HEK293 (cell line): ENCODE measurements at regions of chr17 and their contacts with region 1.

Region 1: DNA sequence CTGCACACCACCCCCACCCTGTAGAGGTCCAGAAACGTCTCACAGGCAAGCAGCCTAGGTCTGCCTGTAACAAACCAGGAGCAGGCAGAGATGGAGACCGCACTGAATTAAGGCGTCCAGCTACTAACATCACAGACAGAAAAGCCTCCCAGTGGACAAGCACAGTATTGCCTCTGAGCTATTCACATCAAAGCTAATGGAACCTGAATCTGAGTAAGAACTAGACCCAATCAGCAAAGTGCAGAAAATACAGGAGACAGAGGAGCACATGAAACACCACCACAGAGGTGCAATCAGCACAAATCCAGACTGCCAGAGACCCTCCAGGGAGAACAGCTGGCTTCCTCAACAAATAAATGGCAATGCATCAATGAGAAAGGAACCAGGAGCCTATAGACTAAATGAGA is 22.2 kb upstream of the PEMT start:
- H3K4me3 ChIP-seq: no peak overlapping the region
- H3K27ac ChIP-seq: no peak overlapping the region
- H3K4me1 ChIP-seq: no peaks in the 10 kb centered on the region
- CTCF ChIP-seq: peak; percentile 57

Region 2: DNA sequence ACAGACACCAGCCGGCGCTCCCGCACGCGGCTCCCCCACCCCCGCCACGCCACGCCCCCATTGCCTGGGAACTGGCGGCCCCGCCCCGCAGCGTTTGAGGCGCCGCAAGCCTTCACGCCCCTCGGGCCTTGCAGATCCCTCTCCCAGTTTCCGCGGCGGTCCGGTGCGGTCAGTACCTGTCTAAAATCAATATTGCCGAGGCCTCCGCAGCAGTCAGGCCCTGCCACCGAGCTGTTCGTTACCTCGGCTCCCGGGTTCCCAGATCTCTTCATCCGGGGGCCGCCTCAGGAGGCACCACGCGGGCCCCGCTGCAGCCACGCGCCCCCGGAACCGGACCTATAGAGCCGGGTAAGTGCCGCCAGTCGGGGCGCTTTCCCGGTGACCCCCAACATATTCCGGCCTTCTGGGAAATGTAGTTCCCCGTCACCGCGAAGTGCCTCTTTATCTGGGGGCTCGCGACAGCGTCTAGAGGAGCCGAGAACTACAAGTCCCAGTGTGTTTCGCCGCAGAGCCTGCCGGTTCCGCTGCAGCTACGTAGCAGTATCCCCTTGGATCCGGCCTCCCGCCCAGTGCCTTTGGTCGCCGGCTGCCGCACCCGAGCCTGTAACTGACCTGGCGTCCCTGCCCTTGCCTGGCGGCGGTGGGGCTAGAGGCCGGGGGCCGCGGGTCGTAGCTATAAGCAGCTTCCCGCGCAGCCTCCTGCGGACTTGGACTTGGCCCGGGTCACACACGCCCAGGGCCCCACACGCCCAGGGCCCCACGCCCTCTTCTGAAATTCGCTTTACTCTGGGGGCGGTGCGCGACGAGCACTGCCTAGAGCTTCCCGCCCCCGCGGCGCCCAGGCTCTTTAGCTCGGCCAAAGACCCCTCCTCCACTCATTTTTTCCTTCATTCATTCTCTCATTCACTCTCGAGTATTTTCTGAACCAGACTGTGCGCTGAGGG is 22.1 kb before region 1 on chr17 and contains the start of gene PEMT:
- CTCF ChIA-PET with region 1: interaction called, 10 read pairs
- POLR2A ChIA-PET with region 1: interaction called, 7 read pairs
- H3K4me3 ChIP-seq: peak within 1 kb of the TSS; percentile 54
- H3K27ac ChIP-seq: peak within 1 kb of the TSS; percentile 70
- H3K4me1 ChIP-seq: peaks cover 7% of the 10 kb centered on the region; the same call in 1 of the 2 replicates
- CTCF ChIP-seq: no peak

Region 3: GRCh38 chr17:17624741-17625140 is 11.0 kb after region 1 on chr17:
- CTCF ChIA-PET with region 1: interaction called, 11 read pairs
- POLR2A ChIA-PET with region 1: no interaction called
- H3K4me3 ChIP-seq: no peak overlapping the region
- H3K27ac ChIP-seq: no peak overlapping the region
- H3K4me1 ChIP-seq: no peaks in the 10 kb centered on the region
- CTCF ChIP-seq: no peak